KBM-7 (cell line): ENCODE measurements at regions of chr10 and their contacts with region 1.

Region 1: DNA sequence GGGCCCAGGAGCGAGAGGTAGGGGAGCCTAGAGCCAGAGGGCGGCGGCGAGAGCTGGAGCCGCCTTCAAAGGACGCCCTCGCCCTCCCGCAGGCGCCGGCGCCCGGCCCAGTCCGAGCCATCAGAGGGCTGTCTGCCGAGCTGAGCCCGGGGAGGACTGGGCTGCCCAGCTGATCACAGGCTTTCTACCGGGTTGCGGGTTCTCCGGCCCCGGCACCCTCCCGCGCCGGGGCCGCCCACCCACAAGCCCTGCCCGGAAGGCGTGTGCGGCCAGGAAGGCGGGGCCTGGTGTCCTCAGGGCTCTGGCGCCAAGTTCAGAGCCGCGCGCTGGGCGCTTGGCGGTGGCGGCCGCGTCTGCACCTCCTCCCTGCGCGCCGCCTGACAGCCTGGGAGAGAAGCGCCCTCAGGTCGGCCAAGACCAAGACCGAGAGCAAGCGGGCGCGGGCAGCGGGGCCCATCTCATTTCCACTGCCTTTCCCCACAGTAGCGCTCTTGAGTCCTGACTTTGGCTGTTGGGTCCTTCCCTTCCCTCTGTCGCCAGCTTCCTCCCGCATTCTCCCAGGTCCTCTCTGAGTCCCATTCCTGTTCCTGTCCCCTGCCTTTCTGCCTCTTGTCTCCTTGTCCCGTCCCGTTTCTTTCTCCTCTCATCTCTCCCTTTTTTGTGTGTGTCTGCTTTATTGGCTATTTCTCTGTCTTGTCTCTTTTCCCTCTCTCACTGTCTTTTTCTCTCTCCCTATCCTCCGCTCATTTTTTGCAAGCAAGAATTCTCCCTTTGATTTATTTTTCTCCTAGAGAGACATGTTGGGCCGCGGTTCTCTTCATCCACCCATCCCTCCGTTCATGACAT is 60.6 kb upstream of the MSMB start:
- DNase-seq: peak; percentile 78

Region 2: DNA sequence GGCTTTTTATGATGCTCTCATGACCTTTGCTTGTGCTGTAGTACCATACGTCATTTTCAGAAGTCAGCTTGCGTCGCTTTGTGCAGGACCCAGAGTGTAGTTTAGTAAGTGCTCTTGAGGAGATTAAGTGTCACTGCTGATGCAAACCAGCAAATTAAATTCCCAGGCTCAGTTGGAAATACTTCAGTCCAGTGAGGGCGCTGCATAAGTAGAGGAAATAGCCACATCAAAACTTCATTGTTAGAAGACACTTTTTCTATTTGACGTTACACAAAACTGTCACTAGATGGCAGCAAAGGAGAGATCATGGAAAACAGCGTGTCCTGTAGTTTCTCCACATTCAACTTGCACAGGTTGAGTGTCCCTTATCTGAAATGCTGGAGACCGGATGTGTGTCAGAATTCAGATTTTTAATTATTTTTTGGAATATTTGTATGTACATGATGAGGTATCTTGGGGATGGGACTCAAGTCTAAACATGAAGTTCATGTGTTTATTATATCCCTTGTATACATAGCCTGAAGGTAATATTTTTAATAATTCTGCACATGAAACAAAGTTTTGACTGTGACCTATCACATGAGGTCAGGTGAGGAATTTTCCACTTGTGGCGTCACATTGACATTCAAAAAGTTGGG is 1098.0 kb before region 1 on chr10:
- in situ Hi-C with region 1: no loop called
- DNase-seq: peak; percentile 93

Region 3: GRCh38 chr10:46284293-46285229 is 177.9 kb after region 1 on chr10:
- in situ Hi-C with region 1: loop called (anchors 5 kb)
- DNase-seq: peak; percentile 89